ENCODE measurements at regions of chr20 and their contacts with region 1.

Region 1: DNA sequence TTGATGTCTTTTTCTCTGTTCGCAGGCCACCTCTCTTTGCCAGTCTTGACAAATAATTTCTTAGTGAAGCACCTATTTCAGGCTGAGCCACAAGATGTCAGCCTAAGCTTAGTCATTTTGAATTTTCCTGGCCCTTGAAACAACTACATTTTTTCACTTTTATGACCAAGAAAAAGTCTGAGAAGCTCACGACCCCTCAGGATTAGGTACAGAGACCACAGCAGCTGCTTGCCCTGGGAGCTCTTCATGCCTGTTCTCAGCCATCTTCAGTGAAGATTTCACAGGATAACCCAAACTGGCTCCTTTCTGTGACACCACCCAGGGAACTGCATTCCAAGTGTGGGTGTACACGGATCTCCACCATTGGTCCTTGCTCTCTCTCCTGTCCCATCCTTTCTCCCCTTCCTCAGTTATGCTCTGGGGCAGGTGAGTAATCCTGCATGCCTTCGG is 38.4 kb upstream of the SPTLC3 start:
- DNase-seq: peak; percentile 51
- ATAC-seq: peak; percentile 81
- H3K4me3 ChIP-seq: no peak overlapping the region
- H3K27ac ChIP-seq: no peak overlapping the region
- H3K4me1 ChIP-seq: no peaks in the 10 kb centered on the region; the same call in 1 of the 2 replicates
- H3K27me3 ChIP-seq: peaks cover 2% of the 10 kb centered on the region
- CTCF ChIP-seq: peak; percentile 74
- POLR2A ChIP-seq: no peak
- RAD21 ChIP-seq: peak; percentile 81

Region 2: GRCh38 chr20:11553603-11554002 is 1416.8 kb before region 1 on chr20:
- CTCF ChIA-PET with region 1: no interaction called
- POLR2A ChIA-PET with region 1: no interaction called
- dilution Hi-C with region 1: no loop called
- in situ Hi-C with region 1: no loop called
- intact Hi-C with region 1: loop called (anchors 2 kb)
- DNase-seq: peak; percentile 18
- ATAC-seq: peak; percentile 76
- H3K4me3 ChIP-seq: no peak overlapping the region
- H3K27ac ChIP-seq: no peak overlapping the region
- H3K4me1 ChIP-seq: no peaks in the 10 kb centered on the region
- H3K27me3 ChIP-seq: peaks cover 3% of the 10 kb centered on the region
- CTCF ChIP-seq: peak; percentile 48
- POLR2A ChIP-seq: no peak
- RAD21 ChIP-seq: peak; percentile 52

Region 3: GRCh38 chr20:12925214-12925755 is 45.1 kb before region 1 on chr20:
- CTCF ChIA-PET with region 1: interaction called, 24 read pairs
- POLR2A ChIA-PET with region 1: no interaction called
- dilution Hi-C with region 1: no loop called
- in situ Hi-C with region 1: loop called (anchors 5 kb)
- intact Hi-C with region 1: loop called (anchors 1 kb)
- DNase-seq: peak; percentile 85
- ATAC-seq: peak; percentile 81
- H3K4me3 ChIP-seq: no peak overlapping the region
- H3K27ac ChIP-seq: no peak overlapping the region
- H3K4me1 ChIP-seq: peaks cover 17% of the 10 kb centered on the region
- H3K27me3 ChIP-seq: peaks cover 2% of the 10 kb centered on the region; the same call in 1 of the 2 replicates
- CTCF ChIP-seq: peak; percentile 100
- POLR2A ChIP-seq: peak; percentile 47
- RAD21 ChIP-seq: peak; percentile 98

Region 4: DNA sequence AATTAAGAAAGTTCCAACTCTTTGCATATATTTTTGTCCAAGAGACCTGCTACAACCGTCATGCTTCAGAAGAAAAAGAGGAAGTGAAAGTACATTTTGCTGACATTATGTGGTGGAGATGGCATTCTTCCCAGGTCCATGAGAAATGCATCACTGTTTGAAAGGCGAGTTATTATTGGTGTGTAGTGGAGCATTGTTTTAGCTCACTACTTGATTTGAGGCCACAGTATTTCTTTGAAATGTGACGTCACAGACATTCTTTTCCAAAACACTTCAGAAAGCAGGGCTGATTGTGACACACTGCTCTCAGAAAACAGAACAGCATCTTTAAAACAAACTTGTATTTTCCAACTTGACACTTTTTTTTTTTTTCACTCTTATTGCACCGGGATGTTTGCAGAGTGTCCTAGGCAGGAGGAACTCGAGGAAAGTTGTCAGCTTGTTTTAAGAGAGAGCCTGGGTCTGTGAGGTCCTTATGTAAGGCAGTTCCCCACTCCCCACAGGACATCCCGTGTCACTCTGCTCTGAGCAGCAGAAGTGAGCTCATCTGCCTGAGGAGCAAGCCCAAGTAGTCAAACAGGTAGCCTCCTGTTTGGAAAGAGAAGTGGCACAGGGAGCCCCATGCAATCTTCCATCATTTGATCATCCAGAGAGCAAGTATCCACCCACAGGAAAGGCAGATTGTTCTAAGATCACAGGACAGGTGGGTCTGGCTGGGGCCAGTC is 39.4 kb after region 1 on chr20:
- CTCF ChIA-PET with region 1: no interaction called
- POLR2A ChIA-PET with region 1: no interaction called
- dilution Hi-C with region 1: no loop called
- in situ Hi-C with region 1: no loop called
- intact Hi-C with region 1: loop called (anchors 5 kb)
- DNase-seq: peak; percentile 96
- ATAC-seq: peak; percentile 65
- H3K4me3 ChIP-seq: peak overlapping the region; percentile 54
- H3K27ac ChIP-seq: peak overlapping the region; percentile 66; the same call in 1 of the 2 replicates
- H3K4me1 ChIP-seq: peaks cover 10% of the 10 kb centered on the region
- H3K27me3 ChIP-seq: no peaks in the 10 kb centered on the region; the same call in 1 of the 2 replicates
- CTCF ChIP-seq: no peak
- POLR2A ChIP-seq: no peak
- RAD21 ChIP-seq: no peak

Region 5: GRCh38 chr20:13105864-13106457 is 135.6 kb after region 1 on chr20:
- CTCF ChIA-PET with region 1: interaction called, 3 read pairs
- POLR2A ChIA-PET with region 1: no interaction called
- dilution Hi-C with region 1: no loop called
- in situ Hi-C with region 1: loop called (anchors 5 kb)
- intact Hi-C with region 1: loop called (anchors 1 kb)
- DNase-seq: peak; percentile 38
- ATAC-seq: peak; percentile 33; the same call in 1 of the 2 replicates
- H3K4me3 ChIP-seq: no peak overlapping the region
- H3K27ac ChIP-seq: no peak overlapping the region
- H3K4me1 ChIP-seq: no peaks in the 10 kb centered on the region; the same call in 1 of the 2 replicates
- H3K27me3 ChIP-seq: peaks cover 2% of the 10 kb centered on the region; the same call in 1 of the 2 replicates
- CTCF ChIP-seq: peak; percentile 84
- POLR2A ChIP-seq: no peak
- RAD21 ChIP-seq: peak; percentile 77

Region 6: GRCh38 chr20:13261460-13262301 is 291.3 kb after region 1 on chr20:
- CTCF ChIA-PET with region 1: no interaction called
- POLR2A ChIA-PET with region 1: no interaction called
- dilution Hi-C with region 1: no loop called
- in situ Hi-C with region 1: no loop called
- intact Hi-C with region 1: loop called (anchors 1 kb)
- DNase-seq: peak; percentile 21
- ATAC-seq: peak; percentile 87
- H3K4me3 ChIP-seq: no peak overlapping the region
- H3K27ac ChIP-seq: no peak overlapping the region
- H3K4me1 ChIP-seq: no peaks in the 10 kb centered on the region
- H3K27me3 ChIP-seq: no peaks in the 10 kb centered on the region; the same call in 1 of the 2 replicates
- CTCF ChIP-seq: peak; percentile 54
- POLR2A ChIP-seq: no peak
- RAD21 ChIP-seq: peak; percentile 27; the same call in 1 of the 2 replicates

Region 7: GRCh38 chr20:13771853-13772453 is 801.6 kb after region 1 on chr20:
- CTCF ChIA-PET with region 1: interaction called, 3 read pairs
- POLR2A ChIA-PET with region 1: no interaction called
- dilution Hi-C with region 1: no loop called
- in situ Hi-C with region 1: no loop called
- intact Hi-C with region 1: loop called (anchors 2 kb)
- DNase-seq: peak; percentile 27
- ATAC-seq: peak; percentile 48; the same call in 1 of the 2 replicates
- H3K4me3 ChIP-seq: no peak overlapping the region
- H3K27ac ChIP-seq: no peak overlapping the region
- H3K4me1 ChIP-seq: no peaks in the 10 kb centered on the region
- H3K27me3 ChIP-seq: no peaks in the 10 kb centered on the region
- CTCF ChIP-seq: peak; percentile 51
- POLR2A ChIP-seq: no peak
- RAD21 ChIP-seq: peak; percentile 26

Measured in IMR-90 (cell line).